IMR-90 (cell line): ENCODE measurements at regions of chr21 and their contacts with region 1.

Region 1: GRCh38 chr21:36330904-36331303 is 10.9 kb downstream of the MORC3 start:
- DNase-seq: peak; percentile 60
- ATAC-seq: peak; percentile 81
- H3K4me3 ChIP-seq: no peak overlapping the region
- H3K27ac ChIP-seq: no peak overlapping the region
- H3K4me1 ChIP-seq: peaks cover 5% of the 10 kb centered on the region
- H3K27me3 ChIP-seq: no peaks in the 10 kb centered on the region
- CTCF ChIP-seq: peak; percentile 65
- POLR2A ChIP-seq: no peak
- RAD21 ChIP-seq: peak; percentile 72

Region 2: GRCh38 chr21:36141513-36141925 is 189.4 kb before region 1 on chr21:
- CTCF ChIA-PET with region 1: no interaction called
- POLR2A ChIA-PET with region 1: no interaction called
- dilution Hi-C with region 1: no loop called
- in situ Hi-C with region 1: loop called (anchors 5 kb)
- intact Hi-C with region 1: loop called (anchors 1 kb)
- DNase-seq: peak; percentile 89
- ATAC-seq: peak; percentile 84
- H3K4me3 ChIP-seq: no peak overlapping the region
- H3K27ac ChIP-seq: no peak overlapping the region
- H3K4me1 ChIP-seq: peaks cover 2% of the 10 kb centered on the region
- H3K27me3 ChIP-seq: no peaks in the 10 kb centered on the region
- CTCF ChIP-seq: peak; percentile 82
- POLR2A ChIP-seq: no peak
- RAD21 ChIP-seq: peak; percentile 85

Region 3: GRCh38 chr21:36149788-36150711 is 180.9 kb before region 1 on chr21:
- CTCF ChIA-PET with region 1: interaction called, 3 read pairs
- POLR2A ChIA-PET with region 1: no interaction called
- dilution Hi-C with region 1: no loop called
- in situ Hi-C with region 1: loop called (anchors 5 kb)
- intact Hi-C with region 1: loop called (anchors 5 kb)
- DNase-seq: peak; percentile 54
- ATAC-seq: peak; percentile 78
- H3K4me3 ChIP-seq: no peak overlapping the region
- H3K27ac ChIP-seq: 0 out of 2 replicates have a peak overlapping the region, but pooled peaks have one; percentile 7
- H3K4me1 ChIP-seq: peaks cover 7% of the 10 kb centered on the region
- H3K27me3 ChIP-seq: no peaks in the 10 kb centered on the region
- CTCF ChIP-seq: no peak
- POLR2A ChIP-seq: no peak
- RAD21 ChIP-seq: no peak

Region 4: DNA sequence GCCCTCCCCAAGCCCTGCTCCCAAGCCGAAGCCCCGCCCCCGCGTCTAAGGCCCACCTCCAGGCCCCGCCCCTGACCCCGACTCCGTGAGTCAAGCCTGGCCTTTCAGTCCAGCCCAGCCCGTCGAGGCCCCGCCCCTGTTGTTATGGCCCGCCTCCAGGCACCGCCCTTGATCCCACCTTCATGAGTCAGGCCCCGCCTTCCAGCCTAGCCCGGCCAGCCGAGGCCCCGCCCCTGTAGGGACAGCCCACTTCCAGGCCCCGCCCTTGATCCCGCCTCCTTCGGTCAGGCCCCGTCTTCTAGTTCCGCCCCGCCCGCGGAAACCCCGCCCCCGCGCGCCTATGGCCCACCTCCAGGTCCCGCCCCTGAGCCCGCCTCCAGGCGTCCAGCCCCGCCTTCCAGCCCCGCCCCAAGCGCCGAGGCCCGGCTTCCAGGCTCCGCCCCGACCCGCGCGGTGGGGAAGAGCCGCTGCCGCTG is 174.5 kb before region 1 on chr21:
- CTCF ChIA-PET with region 1: interaction called, 3 read pairs
- POLR2A ChIA-PET with region 1: no interaction called
- dilution Hi-C with region 1: no loop called
- in situ Hi-C with region 1: no loop called
- intact Hi-C with region 1: loop called (anchors 5 kb)
- DNase-seq: peak; percentile 98
- ATAC-seq: peak; percentile 96
- H3K4me3 ChIP-seq: peak overlapping the region; percentile 88
- H3K27ac ChIP-seq: no peak overlapping the region
- H3K4me1 ChIP-seq: peaks cover 4% of the 10 kb centered on the region
- H3K27me3 ChIP-seq: no peaks in the 10 kb centered on the region
- CTCF ChIP-seq: no peak
- POLR2A ChIP-seq: no peak; the same call in 1 of the 2 replicates
- RAD21 ChIP-seq: no peak

Region 5: DNA sequence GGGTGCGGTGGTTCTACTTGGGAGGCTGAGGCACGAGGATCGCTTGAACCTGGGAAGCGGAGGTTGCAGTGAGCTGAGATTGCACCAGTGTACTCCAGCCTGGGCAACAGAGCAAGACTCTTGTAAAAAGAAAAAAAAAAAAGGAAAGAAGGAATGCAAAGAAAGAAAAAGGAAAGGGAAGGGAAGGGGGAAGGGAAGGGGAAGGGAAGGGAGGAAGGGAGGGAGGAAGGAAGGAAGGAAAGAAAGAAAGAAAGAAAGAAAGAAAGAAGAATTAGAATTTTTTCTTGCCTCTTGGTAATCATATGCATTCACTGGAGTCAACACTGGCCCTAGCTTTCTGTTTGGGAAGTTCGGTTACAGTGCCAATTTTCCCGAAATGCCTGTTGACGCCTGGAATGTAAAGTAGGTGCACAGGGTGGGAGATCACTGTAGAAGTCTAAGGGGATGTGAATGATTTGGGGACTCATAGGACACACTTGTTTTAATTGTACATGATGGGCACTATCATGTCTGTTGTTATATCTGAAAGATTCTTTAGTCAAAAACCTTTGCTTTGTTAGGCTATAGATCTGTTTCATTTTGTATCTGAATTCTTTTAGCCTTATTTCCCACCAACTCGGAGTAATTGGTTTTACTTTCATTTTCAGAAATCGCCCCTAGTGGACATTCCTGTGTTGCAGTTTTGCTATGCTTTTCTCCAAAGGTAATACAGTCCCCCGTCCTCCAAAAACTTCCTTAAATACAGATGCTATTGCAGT is 70.7 kb before region 1 on chr21:
- CTCF ChIA-PET with region 1: no interaction called
- POLR2A ChIA-PET with region 1: interaction called, 3 read pairs
- dilution Hi-C with region 1: no loop called
- in situ Hi-C with region 1: no loop called
- intact Hi-C with region 1: loop called (anchors 2 kb)
- DNase-seq: peak; percentile 73
- ATAC-seq: peak; percentile 98
- H3K4me3 ChIP-seq: peak overlapping the region; percentile 93
- H3K27ac ChIP-seq: peak overlapping the region; percentile 65
- H3K4me1 ChIP-seq: no peaks in the 10 kb centered on the region
- H3K27me3 ChIP-seq: no peaks in the 10 kb centered on the region
- CTCF ChIP-seq: peak; percentile 68
- POLR2A ChIP-seq: no peak
- RAD21 ChIP-seq: peak; percentile 26

Region 6: GRCh38 chr21:36927719-36928117 is 596.8 kb after region 1 on chr21:
- CTCF ChIA-PET with region 1: no interaction called
- POLR2A ChIA-PET with region 1: no interaction called
- dilution Hi-C with region 1: no loop called
- in situ Hi-C with region 1: no loop called
- intact Hi-C with region 1: no loop called
- DNase-seq: peak; percentile 97
- ATAC-seq: peak; percentile 96
- H3K4me3 ChIP-seq: no peak overlapping the region
- H3K27ac ChIP-seq: no peak overlapping the region; the same call in 1 of the 2 replicates
- H3K4me1 ChIP-seq: peaks cover 10% of the 10 kb centered on the region
- H3K27me3 ChIP-seq: no peaks in the 10 kb centered on the region
- CTCF ChIP-seq: peak; percentile 97
- POLR2A ChIP-seq: no peak
- RAD21 ChIP-seq: peak; percentile 95

Region 7: GRCh38 chr21:38140210-38140907 is 1809.5 kb after region 1 on chr21:
- CTCF ChIA-PET with region 1: no interaction called
- POLR2A ChIA-PET with region 1: interaction called, 23 read pairs
- dilution Hi-C with region 1: no loop called
- in situ Hi-C with region 1: no loop called
- intact Hi-C with region 1: no loop called
- DNase-seq: peak; percentile 25
- ATAC-seq: peak; percentile 70
- H3K4me3 ChIP-seq: no peak overlapping the region
- H3K27ac ChIP-seq: peak overlapping the region; percentile 63
- H3K4me1 ChIP-seq: peaks cover 6% of the 10 kb centered on the region
- H3K27me3 ChIP-seq: peaks cover 6% of the 10 kb centered on the region
- CTCF ChIP-seq: no peak
- POLR2A ChIP-seq: no peak
- RAD21 ChIP-seq: no peak